CD8-positive, alpha-beta T cell (primary cell): ENCODE measurements at regions of chr7 and their contacts with region 1.

Region 1: DNA sequence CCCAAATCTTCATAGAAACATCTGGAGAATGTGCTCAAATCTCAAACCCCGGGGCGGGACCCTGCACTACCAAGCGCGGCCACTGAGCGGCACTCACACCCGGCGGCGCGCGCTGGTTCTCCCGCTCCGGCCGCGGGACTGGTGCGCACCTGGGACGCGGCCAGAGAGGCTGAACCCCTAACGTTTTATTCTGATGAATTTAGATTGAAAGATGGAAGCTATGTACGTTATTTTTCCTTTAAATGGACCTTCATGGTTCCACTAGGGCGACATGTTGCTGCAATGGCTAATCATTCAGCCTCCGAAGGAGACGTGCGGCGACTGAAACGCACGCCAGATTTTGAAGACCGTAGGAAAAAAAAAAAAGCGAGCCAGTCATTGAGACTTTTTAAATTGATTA is 107.0 kb upstream of the INSIG1 start:
- DNase-seq: peak in 8 of 9 experiments; percentile 38 to 79 (median 62)
- ATAC-seq: peak; percentile 90
- H3K4me3 ChIP-seq: no peak overlapping the region
- H3K4me3 Mint-ChIP-seq: peak overlapping the region; percentile 22
- H3K27ac ChIP-seq: no peak overlapping the region
- H3K27ac Mint-ChIP-seq: no peak overlapping the region
- H3K4me1 ChIP-seq: peaks cover 2% of the 10 kb centered on the region
- H3K4me1 Mint-ChIP-seq: peaks cover 3% of the 10 kb centered on the region
- H3K27me3 ChIP-seq: peaks cover 0 to 2% of the 10 kb centered on the region in 2 experiments
- H3K27me3 Mint-ChIP-seq: peaks cover 14% of the 10 kb centered on the region
- CTCF ChIP-seq: peak; percentile 91

Region 2: DNA sequence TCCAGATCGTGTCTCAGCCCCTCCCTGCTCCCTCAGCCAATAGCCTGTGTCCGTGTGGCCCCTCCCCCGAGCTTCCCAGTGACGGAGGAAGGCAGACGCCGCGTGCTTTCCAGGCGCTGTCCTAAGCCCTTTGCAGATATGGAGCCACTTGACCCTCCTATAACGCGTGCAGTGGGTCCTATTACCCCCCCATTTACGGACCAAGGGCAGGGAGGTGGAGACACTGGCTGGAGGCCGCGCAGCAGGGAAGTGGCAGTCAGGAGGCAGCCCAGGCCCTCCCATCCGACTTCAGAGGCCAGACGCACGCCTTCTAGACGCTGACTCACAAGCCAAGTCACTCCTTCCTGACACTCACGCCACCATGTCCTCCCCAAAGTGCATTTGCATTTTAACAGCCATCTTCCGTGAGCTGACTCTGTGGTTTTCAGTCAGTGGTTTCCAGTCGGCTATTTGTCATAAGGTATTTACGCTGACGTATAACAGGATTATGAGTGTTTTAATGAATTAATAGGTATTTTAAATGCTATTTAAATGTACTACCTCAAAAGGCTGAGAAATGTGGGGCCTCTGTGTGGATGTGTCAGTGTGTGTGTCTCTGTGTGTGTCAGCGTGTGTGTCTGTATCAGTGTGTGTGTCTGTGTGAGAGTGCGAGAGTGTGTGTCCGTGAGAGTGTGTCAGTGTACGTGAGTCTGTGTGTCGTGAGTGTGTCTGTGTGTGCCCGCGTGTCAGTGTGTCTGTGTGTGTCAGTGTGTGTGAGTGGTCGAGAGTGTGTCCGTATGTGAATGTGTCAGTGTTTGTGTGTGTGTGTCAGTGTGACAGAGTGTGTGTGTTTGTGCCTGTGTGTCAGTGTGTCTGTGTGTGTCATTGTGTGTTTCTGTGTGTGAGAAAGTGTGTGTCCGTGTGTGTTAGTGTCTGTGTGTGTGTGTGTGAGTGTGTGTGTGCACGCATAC is 15.0 kb after region 1 on chr7:
- CTCF ChIA-PET with region 1: interaction called, 9 read pairs
- POLR2A ChIA-PET with region 1: no interaction called
- intact Hi-C with region 1: loop called in 1 of 2 experiments (anchors 1 kb)
- DNase-seq: peak; percentile 71 to 97 (median 81)
- ATAC-seq: peak; percentile 90
- H3K4me3 ChIP-seq: peak overlapping the region; percentile 59 to 65
- H3K4me3 Mint-ChIP-seq: peak overlapping the region; percentile 80
- H3K27ac ChIP-seq: peak overlapping the region; percentile 59 to 94
- H3K27ac Mint-ChIP-seq: peak overlapping the region; percentile 94
- H3K4me1 ChIP-seq: peaks cover 14% of the 10 kb centered on the region
- H3K4me1 Mint-ChIP-seq: peaks cover 22% of the 10 kb centered on the region
- H3K27me3 ChIP-seq: no peaks in the 10 kb centered on the region
- H3K27me3 Mint-ChIP-seq: no peaks in the 10 kb centered on the region
- CTCF ChIP-seq: no peak

Region 3: DNA sequence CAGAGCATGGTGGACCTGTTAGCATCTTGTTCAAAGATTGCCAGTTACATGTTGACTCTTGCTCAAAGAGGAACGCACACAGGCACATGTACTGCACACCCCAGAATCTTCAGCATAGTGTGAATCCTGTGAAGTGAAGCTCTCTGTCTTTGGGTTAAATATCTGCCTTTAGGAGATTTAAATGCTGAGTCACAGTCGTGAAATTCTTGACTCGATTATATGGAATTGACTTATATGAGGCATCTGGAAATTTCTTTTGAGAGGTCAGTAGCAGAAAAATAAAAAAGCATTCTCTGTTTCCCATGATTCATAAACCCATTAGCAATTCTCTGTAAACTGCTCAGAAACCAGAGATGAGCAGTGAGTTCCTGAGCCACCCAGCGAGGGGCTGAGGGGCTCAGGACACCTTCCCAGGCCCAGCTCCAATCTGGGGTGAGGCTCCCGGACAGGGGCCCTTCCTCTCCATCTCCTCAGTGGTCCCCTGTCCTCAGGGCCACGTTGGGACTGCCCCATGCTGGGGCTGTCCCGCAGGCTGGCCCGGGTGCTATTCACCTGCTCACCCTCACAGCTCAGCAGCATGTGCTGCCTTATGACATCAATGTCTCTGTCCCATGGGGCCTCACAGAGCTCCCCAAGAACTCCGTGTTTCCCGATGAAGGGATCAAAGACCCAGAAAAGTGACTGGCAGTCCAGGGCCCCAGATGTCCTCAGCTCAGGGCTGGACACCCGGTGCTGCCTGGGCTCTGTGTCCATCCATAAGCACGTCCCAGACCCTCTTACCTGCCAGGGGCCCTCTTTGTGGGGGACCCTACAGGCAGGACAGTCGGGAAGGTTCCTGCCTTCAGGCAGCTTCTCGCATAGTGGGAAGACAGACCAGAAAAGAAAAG is 57.0 kb after region 1 on chr7:
- CTCF ChIA-PET with region 1: interaction called, 3 read pairs
- POLR2A ChIA-PET with region 1: no interaction called
- intact Hi-C with region 1: loop called in 1 of 2 experiments (anchors 10 kb)
- DNase-seq: no peak
- ATAC-seq: no peak
- H3K4me3 ChIP-seq: no peak overlapping the region
- H3K4me3 Mint-ChIP-seq: no peak overlapping the region
- H3K27ac ChIP-seq: no peak overlapping the region
- H3K27ac Mint-ChIP-seq: no peak overlapping the region
- H3K4me1 ChIP-seq: no peaks in the 10 kb centered on the region
- H3K4me1 Mint-ChIP-seq: no peaks in the 10 kb centered on the region
- H3K27me3 ChIP-seq: no peaks in the 10 kb centered on the region
- H3K27me3 Mint-ChIP-seq: peaks cover 3% of the 10 kb centered on the region
- CTCF ChIP-seq: no peak